ENCODE measurements at regions of chr14 and their contacts with region 1.

Region 1: GRCh38 chr14:65164068-65164824 is 61.9 kb upstream of the MAX start:
- DNase-seq: no peak
- H3K4me3 ChIP-seq: no peak overlapping the region
- H3K27ac ChIP-seq: no peak overlapping the region
- H3K4me1 ChIP-seq: no peaks in the 10 kb centered on the region
- H3K27me3 ChIP-seq: no peaks in the 10 kb centered on the region
- CTCF ChIP-seq: peak; percentile 51 to 61 (median 54)
- EP300 ChIP-seq: no peak
- POLR2A ChIP-seq: no peak

Region 2: GRCh38 chr14:64983439-64984310 is 180.6 kb before region 1 on chr14:
- intact Hi-C with region 1: no loop called
- DNase-seq: no peak
- H3K4me3 ChIP-seq: peak overlapping the region in 3 of 4 donors; percentile 12 to 37 (median 30)
- H3K27ac ChIP-seq: no peak overlapping the region
- H3K4me1 ChIP-seq: peaks cover 9 to 28% (median 22%) of the 10 kb centered on the region in 4 donors
- H3K27me3 ChIP-seq: no peaks in the 10 kb centered on the region
- CTCF ChIP-seq: peak; percentile 68 to 75 (median 72)
- EP300 ChIP-seq: no peak
- POLR2A ChIP-seq: no peak

Region 3: DNA sequence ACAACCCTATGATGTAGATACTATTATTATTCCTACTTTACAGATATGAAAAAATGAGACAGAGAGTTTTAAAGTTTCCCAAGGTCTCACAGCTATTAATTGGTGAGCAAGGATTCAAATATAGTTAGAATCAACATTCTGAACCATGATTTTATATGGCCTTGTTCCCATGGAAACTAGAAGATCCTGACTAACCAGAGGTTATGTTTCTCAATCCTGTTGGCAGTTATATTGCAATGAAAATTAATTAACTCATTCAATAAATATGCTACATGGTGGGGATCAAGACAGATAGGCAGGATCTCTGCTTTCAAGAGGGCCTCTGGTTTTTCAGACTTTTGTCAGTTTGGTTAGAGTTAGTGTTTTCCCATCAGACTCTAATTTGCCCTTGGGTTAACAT is 239.0 kb after region 1 on chr14:
- intact Hi-C with region 1: no loop called
- DNase-seq: peak; percentile 3
- H3K4me3 ChIP-seq: no peak overlapping the region
- H3K27ac ChIP-seq: no peak overlapping the region
- H3K4me1 ChIP-seq: no peaks in the 10 kb centered on the region
- H3K27me3 ChIP-seq: no peaks in the 10 kb centered on the region
- CTCF ChIP-seq: no peak
- EP300 ChIP-seq: no peak
- POLR2A ChIP-seq: no peak

Region 4: GRCh38 chr14:65824285-65824977 is 660.2 kb after region 1 on chr14:
- intact Hi-C with region 1: loop called (anchors 2 kb)
- DNase-seq: no peak
- H3K4me3 ChIP-seq: no peak overlapping the region
- H3K27ac ChIP-seq: no peak overlapping the region
- H3K4me1 ChIP-seq: no peaks in the 10 kb centered on the region
- H3K27me3 ChIP-seq: peaks cover 0 to 28% (median 0%) of the 10 kb centered on the region in 4 donors
- CTCF ChIP-seq: peak; percentile 83 to 96 (median 91)
- EP300 ChIP-seq: no peak
- POLR2A ChIP-seq: no peak

Region 5: DNA sequence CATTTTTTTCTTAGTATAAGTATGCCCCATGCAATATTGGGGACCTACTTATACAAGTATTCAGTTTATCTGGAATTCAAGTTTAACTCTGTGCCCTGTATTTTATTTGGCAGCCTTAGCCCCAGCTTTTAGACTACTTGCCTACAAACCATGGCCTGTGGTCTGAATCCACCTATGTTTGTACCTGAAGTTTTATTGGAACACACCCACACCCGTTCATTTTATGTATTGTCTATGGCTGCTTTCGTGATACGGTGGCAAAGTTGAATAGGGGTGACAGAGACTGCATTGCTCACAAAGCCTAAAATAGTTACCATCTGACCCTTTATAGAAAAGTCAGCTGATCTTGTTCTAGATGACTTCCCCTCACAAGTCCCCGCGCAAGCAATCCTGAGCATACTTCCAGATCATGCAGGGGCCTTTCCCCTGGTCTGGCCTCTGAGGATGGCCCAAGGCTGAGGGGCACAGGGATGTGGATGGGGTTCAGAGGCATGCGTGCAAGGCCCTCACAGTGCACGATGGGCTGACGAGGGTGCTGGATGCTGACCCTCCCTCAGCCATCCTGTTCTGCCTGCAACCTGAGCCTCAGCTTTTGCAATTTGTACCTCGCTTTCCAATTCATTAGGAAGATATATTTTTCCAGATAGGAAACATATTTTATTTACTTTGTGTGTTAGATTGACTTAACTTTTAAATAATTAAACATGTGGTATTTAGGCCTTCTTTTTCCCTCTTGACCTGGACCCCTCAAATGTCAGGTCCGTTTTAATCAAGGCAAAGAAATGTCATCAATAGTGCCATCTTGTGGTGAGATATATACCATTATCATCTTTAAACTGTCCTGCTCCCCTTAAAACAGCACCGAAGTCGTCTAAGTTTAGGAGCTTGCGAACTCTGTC is 794.7 kb after region 1 on chr14:
- intact Hi-C with region 1: loop called (anchors 10 kb)
- DNase-seq: no peak
- H3K4me3 ChIP-seq: no peak overlapping the region
- H3K27ac ChIP-seq: no peak overlapping the region
- H3K4me1 ChIP-seq: no peaks in the 10 kb centered on the region
- H3K27me3 ChIP-seq: peaks cover 0 to 13% (median 0%) of the 10 kb centered on the region in 4 donors
- CTCF ChIP-seq: peak; percentile 12 to 45 (median 29)
- EP300 ChIP-seq: no peak
- POLR2A ChIP-seq: no peak